Keratinocyte (primary cell): ENCODE measurements at regions of chr6 and their contacts with region 1.

Region 1: DNA sequence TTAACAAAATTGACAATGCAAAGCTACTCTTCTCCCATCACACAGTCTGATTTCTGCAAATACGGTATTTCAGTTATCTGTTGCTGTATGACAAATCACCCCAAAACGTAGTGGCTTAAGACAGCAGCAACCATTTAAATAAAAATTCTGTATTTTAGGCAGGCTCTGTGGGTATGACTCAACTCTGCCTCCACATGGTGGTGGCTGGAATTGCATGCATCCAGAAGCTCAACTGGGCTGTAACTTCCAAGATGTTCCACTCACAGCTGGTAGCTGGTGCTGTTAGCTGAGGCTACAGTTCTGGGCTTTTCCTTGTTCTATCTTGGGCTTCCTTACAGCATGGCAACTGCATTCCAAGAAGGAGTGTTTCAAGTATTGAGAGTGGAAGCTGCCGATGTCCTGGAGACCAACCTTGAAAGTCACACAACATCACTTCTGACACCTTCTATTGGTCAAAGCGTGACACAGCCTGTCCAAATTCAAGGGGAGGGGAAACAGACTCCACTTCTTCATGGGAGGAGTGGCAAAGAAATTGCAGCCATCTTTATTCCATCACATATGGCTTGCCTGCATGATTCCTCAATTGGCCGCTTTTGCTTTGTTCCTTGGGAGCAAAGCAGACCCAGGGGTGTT is 39.7 kb upstream of the TULP1 start:
- DNase-seq: peak; percentile 30
- H3K4me3 ChIP-seq: no peak overlapping the region
- H3K27ac ChIP-seq: no peak overlapping the region
- H3K4me1 ChIP-seq: no peaks in the 10 kb centered on the region
- H3K27me3 ChIP-seq: no peaks in the 10 kb centered on the region
- CTCF ChIP-seq: peak; percentile 87 to 99 (median 91)

Region 2: DNA sequence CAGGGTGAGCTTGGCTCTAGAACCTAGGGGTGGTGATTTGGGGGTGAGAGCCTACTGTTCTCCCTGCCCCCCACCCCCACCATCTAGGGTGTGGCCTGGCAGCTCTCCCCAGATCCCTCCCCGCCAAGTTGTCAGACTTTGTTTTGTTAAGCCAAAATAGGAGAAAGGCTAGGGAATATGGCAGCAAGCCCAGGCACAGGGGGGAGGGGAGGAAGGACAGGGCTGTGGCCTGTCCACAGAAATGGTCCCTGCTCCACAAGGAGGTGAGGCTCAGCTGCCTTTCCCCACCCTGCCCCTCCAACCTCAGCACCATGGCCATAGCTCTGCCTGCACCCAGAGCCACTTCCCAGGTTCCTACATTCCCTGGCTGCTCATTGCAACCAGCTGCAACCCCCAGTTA is 321.5 kb before region 1 on chr6:
- dilution Hi-C with region 1: no loop called
- DNase-seq: no peak
- H3K4me3 ChIP-seq: no peak overlapping the region
- H3K27ac ChIP-seq: no peak overlapping the region
- H3K4me1 ChIP-seq: no peaks in the 10 kb centered on the region
- H3K27me3 ChIP-seq: no peaks in the 10 kb centered on the region
- CTCF ChIP-seq: no peak

Region 3: GRCh38 chr6:35731736-35732532 is 179.5 kb after region 1 on chr6:
- dilution Hi-C with region 1: loop called (anchors 25 kb)
- DNase-seq: peak; percentile 59
- H3K4me3 ChIP-seq: peak overlapping the region; percentile 46 to 76 (median 72)
- H3K27ac ChIP-seq: peak overlapping the region; percentile 97
- H3K4me1 ChIP-seq: peaks cover 56% of the 10 kb centered on the region
- H3K27me3 ChIP-seq: no peaks in the 10 kb centered on the region
- CTCF ChIP-seq: peak in 1 of 3 experiments; percentile 7

Region 4: DNA sequence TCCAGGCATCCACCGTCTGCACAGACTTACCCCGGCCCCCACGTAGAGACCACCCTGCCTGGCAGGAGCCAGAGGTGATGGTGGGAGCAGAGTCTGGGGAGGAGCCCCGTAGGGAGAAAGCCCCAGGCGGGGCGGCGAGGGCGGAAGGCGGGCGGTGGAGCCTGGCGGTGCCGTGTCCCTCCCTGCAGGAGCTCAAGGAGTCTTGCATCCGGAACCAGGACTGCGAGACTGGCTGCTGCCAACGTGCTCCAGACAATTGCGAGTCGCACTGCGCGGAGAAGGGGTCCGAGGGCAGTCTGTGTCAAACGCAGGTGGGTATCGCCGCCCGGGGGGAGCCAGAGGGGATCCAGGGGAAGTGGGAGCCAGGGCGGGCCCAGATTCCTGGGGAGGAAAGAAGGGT is 234.4 kb after region 1 on chr6:
- dilution Hi-C with region 1: no loop called
- DNase-seq: no peak
- H3K4me3 ChIP-seq: no peak overlapping the region
- H3K27ac ChIP-seq: no peak overlapping the region
- H3K4me1 ChIP-seq: peaks cover 6% of the 10 kb centered on the region
- H3K27me3 ChIP-seq: peaks cover 37% of the 10 kb centered on the region
- CTCF ChIP-seq: no peak